Right ventricle myocardium superior (tissue), 1 donor: ENCODE measurements at regions of chr15 and their contacts with region 1.

Region 1: GRCh38 chr15:41774062-41774881 is at the start of gene MAPKBP1:
- DNase-seq: peak; percentile 99
- ATAC-seq: peak; percentile 98
- total RNA-seq, gene MAPKBP1: 15.1 TPM

Region 2: GRCh38 chr15:41811432-41812195 is 37.3 kb after region 1 on chr15:
- intact Hi-C with region 1: loop called (anchors 1 kb)
- DNase-seq: peak; percentile 91
- ATAC-seq: peak; percentile 94